Activated CD4-positive, alpha-beta memory T cell treated with anti-CD3 and anti-CD28 coated beads, Interleukin-2, amount 10 ng/mL, durations not matched to agents 7 days and 5 days (primary cell): ENCODE measurements at regions of chr1 and their contacts with region 1.

Region 1: DNA sequence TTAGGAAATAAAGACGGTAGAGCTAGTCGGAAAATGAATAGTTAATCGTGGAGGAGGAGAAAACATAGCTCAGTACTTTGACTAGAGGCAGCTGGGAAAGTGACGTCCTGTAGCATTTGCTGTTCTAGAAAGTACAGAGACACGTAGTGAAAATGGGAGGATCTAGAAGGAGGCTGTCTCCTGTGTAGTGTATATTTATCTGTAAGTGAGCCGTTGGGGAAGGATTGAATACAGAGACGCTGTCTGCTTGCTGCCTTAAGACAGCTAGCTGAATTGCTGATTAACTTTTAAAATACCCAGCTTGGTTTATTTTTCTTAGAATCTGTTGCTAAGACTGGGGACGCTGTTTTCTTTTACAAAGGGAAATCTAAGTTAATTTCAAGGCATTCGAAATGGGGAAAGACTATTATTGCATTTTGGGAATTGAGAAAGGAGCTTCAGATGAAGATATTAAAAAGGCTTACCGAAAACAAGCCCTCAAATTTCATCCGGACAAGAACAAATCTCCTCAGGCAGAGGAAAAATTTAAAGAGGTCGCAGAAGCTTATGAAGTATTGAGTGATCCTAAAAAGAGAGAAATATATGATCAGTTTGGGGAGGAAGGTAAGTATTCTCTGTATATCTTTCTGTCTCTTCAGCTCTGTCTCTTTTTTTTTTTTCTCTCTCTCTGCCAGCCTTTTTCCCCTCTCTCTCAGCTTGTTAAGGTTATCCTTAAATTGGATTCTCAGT is at the start of gene DNAJB4:
- DNase-seq: peak; percentile 72
- H3K4me3 Mint-ChIP-seq: peak within 1 kb of the TSS; percentile 88
- H3K27ac Mint-ChIP-seq: peak within 1 kb of the TSS; percentile 92
- H3K4me1 Mint-ChIP-seq: peaks cover 38% of the 10 kb centered on the region
- H3K27me3 Mint-ChIP-seq: peaks cover 2% of the 10 kb centered on the region
- total RNA-seq, gene DNAJB4: 12.9 to 16.2 TPM

Region 2: DNA sequence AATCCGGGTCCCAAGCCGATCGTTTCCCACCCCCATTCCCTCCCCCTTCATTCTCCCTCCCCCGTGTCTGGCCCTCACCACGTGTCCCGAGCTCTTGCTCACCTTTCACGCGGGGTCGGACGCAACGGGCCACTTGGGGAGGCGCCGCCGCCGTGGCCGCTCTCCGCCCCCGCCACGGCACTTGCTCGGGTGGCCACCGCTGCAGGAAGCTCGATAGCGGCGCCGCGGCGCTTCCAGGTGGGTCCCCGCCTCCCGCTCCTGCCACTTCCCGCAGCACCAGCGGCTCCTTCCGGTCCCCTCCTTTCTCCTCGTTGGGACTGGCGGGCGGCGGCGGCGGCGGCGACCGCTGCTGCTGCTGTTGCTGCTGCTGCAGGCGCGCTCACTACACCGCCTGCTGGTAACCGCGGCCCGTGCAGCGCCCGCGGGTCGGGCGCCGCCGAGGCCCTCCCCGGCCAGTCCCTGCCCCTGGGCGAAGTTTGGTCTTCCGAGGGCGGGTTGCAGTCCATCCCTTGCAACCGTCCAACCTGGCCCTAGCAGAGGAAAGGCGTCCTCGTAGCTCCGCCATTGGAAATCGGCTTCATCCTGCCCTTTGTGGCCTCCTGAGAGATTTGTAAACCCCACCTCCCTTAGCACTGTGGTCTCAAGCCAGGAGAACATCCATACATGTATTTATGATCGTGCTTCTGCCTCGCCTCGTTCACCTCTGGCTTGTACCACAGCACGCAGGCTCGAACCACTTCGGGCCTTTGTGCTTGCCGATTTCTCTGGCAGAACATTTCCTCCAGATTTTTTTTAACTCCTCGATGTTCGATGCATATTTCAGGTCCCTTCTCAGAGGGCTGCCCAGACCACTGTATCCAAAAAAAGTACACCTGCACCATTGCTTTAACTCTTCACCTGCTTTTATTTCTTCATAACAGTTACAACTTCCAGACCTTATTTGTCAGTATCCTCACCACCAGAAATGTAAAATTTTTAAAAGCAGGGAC is 321.4 kb before region 1 on chr1:
- CTCF ChIA-PET with region 1: interaction called, 5 read pairs
- POLR2A ChIA-PET with region 1: interaction called, 28 read pairs
- DNase-seq: peak; percentile 92
- H3K4me3 Mint-ChIP-seq: peak overlapping the region; percentile 79
- H3K27ac Mint-ChIP-seq: peak overlapping the region; percentile 85
- H3K4me1 Mint-ChIP-seq: peaks cover 29% of the 10 kb centered on the region
- H3K27me3 Mint-ChIP-seq: no peaks in the 10 kb centered on the region

Region 3: GRCh38 chr1:77779529-77780281 is 225.2 kb before region 1 on chr1 and contains the start of gene MIGA1:
- CTCF ChIA-PET with region 1: no interaction called
- POLR2A ChIA-PET with region 1: interaction called, 20 read pairs
- DNase-seq: peak; percentile 88
- H3K4me3 Mint-ChIP-seq: peak within 1 kb of the TSS; percentile 89
- H3K27ac Mint-ChIP-seq: peak within 1 kb of the TSS; percentile 73
- H3K4me1 Mint-ChIP-seq: peaks cover 36% of the 10 kb centered on the region
- H3K27me3 Mint-ChIP-seq: no peaks in the 10 kb centered on the region
- total RNA-seq, gene MIGA1: 11.5 to 12.8 TPM

Region 4: GRCh38 chr1:77991638-77992037 is 13.2 kb before region 1 on chr1:
- CTCF ChIA-PET with region 1: interaction called, 7 read pairs
- POLR2A ChIA-PET with region 1: interaction called, 671 read pairs
- DNase-seq: no peak
- H3K4me3 Mint-ChIP-seq: no peak overlapping the region
- H3K27ac Mint-ChIP-seq: no peak overlapping the region
- H3K4me1 Mint-ChIP-seq: peaks cover 19% of the 10 kb centered on the region
- H3K27me3 Mint-ChIP-seq: no peaks in the 10 kb centered on the region

Region 5: DNA sequence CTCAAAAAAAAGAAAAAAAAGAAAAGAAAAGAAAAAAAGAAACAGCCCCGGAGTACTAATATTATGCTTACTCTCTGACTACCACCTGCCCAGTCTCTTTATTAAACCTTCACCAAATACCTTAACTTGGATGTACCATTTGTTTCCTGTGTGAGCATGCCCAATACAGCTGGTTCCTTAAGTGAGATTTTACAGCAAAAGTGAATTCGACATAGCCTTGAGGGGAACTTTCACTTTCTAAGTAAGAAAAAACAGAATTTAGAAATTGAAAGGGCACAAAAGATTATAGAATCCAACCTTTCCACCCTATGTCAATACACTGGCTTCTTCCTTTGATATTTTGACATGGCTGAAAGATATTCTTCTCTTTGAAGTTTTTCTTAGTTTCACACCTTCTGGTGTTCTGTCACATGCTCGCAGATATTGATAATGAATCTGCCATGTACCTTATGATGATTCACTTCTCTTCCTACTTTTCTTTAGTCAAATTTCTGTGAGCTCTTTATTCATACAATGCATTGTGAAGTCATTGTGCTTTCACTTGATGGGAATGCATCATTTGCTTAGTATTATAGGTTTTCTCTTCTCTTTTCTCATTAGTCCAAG is 35.7 kb after region 1 on chr1:
- CTCF ChIA-PET with region 1: no interaction called
- POLR2A ChIA-PET with region 1: interaction called, 18 read pairs
- DNase-seq: no peak
- H3K4me3 Mint-ChIP-seq: no peak overlapping the region
- H3K27ac Mint-ChIP-seq: no peak overlapping the region
- H3K4me1 Mint-ChIP-seq: peaks cover 17% of the 10 kb centered on the region
- H3K27me3 Mint-ChIP-seq: peaks cover 23% of the 10 kb centered on the region

Region 6: DNA sequence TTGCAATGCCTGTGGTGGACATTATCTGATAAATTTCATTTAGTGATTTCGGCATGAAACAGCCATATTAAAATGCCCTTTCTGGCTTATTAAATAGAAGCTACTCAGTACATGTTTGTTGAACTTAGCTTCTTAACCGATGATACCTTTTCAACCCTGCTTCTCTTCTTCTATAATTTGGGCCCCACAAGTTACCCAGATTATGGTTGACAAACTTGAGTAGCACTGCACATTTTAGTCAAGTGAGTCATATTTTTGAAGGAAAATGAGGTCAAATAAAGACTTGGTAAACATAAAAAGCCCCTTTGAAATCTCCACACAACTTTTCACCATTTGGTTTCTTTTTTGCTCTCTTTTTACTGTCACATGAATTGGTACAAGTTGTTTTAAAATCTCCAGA is 74.7 kb after region 1 on chr1:
- CTCF ChIA-PET with region 1: no interaction called
- POLR2A ChIA-PET with region 1: interaction called, 12 read pairs
- DNase-seq: no peak
- H3K4me3 Mint-ChIP-seq: no peak overlapping the region
- H3K27ac Mint-ChIP-seq: no peak overlapping the region
- H3K4me1 Mint-ChIP-seq: peaks cover 15% of the 10 kb centered on the region
- H3K27me3 Mint-ChIP-seq: peaks cover 2% of the 10 kb centered on the region

Region 7: DNA sequence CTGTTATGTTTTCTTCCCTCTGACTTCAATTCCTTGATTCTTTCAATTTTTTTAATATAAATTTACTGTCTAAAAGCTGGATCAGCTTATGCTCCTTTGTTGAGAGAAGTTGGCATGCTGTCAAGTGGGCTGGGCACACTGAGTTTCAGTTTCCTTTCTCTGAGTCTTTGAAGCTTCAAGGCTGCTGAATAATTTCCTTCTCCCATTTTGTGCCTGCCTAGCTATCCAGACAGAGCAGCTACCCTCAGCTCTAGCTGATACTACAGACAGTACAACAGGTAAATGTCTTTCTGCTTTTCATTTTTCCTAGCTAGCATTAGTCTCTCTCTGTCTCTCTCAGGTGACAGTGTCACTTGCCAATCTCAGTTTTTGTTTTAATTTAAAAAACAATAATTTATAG is 644.7 kb after region 1 on chr1 and contains the start of gene IFI44:
- CTCF ChIA-PET with region 1: no interaction called
- POLR2A ChIA-PET with region 1: interaction called, 10 read pairs
- DNase-seq: peak; percentile 75
- H3K4me3 Mint-ChIP-seq: peak within 1 kb of the TSS; percentile 98
- H3K27ac Mint-ChIP-seq: peak within 1 kb of the TSS; percentile 90
- H3K4me1 Mint-ChIP-seq: peaks cover 59% of the 10 kb centered on the region
- H3K27me3 Mint-ChIP-seq: no peaks in the 10 kb centered on the region
- total RNA-seq, gene IFI44: 320 to 338 TPM